ENCODE measurements at regions of chr14 and their contacts with region 1.

Region 1: DNA sequence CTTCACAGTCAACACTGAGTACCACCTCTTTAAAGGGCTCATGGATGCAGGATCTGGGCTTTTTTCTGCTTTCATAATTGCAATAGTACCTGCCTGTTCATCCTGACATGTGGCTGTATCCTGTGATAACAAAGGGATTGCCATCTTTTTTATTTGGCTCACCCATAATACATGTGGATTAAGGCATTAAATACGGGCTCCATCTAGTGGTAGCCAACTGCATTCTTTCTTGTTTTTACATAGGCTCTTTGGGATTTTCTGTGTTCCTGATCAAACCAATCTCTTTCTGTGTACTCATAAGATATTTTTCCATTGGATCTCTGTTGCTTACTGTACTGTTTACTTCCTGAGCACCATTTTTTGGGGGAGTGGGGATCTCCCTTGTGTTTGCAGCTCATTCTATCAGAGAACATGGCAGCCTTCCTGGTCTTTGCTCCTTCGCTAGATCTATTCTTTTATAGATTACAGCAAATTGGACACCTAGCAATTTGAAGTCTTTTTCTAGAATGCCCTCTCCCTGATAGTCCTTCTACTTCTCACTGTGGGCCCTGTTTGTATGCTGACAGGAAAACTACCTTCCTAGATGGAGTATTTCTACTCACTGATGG is 723.4 kb upstream of the MDGA2 start:
- DNase-seq: peak; percentile 86
- ATAC-seq: peak; percentile 77
- H3K4me3 ChIP-seq: no peak overlapping the region
- H3K27ac ChIP-seq: no peak overlapping the region
- H3K4me1 ChIP-seq: no peaks in the 10 kb centered on the region
- H3K27me3 ChIP-seq: peaks cover 10% of the 10 kb centered on the region; the same call in 1 of the 2 replicates
- CTCF ChIP-seq: peak; percentile 96

Region 2: DNA sequence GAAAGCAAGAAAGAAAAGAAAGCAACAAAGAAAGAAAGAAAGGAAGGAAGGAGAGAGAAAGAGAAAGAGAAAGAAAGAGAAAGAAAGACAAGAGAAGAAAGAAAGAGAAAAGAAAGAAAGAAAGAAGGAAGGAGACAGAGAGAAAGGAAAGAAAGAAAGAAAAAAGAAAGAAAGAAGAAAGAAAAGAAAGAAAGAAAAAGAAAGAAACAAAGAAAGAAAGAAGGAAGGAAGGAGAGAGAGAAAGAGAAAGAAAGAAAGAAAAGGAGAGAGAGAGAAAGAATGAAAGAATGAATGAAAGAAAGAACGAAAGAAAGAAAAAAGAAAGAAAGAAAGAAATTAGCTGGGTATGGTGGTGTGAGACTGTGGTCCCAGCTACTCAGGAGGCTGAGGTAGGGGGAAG is 323.3 kb before region 1 on chr14:
- CTCF ChIA-PET with region 1: no interaction called
- POLR2A ChIA-PET with region 1: no interaction called
- intact Hi-C with region 1: loop called (anchors 10 kb)
- DNase-seq: no peak
- ATAC-seq: no peak
- H3K4me3 ChIP-seq: no peak overlapping the region
- H3K27ac ChIP-seq: no peak overlapping the region
- H3K4me1 ChIP-seq: no peaks in the 10 kb centered on the region
- H3K27me3 ChIP-seq: peaks cover 24% of the 10 kb centered on the region
- CTCF ChIP-seq: no peak

Region 3: GRCh38 chr14:48243900-48244299 is 154.9 kb before region 1 on chr14:
- CTCF ChIA-PET with region 1: no interaction called
- POLR2A ChIA-PET with region 1: no interaction called
- intact Hi-C with region 1: no loop called
- DNase-seq: no peak
- ATAC-seq: no peak
- H3K4me3 ChIP-seq: no peak overlapping the region
- H3K27ac ChIP-seq: no peak overlapping the region
- H3K4me1 ChIP-seq: no peaks in the 10 kb centered on the region
- H3K27me3 ChIP-seq: 0 out of 2 replicates have a peak, but pooled peaks cover 6% of the 10 kb centered on the region
- CTCF ChIP-seq: no peak

Measured in PC-3 (cell line).